Activated T-helper 2 cell treated with anti-CD3 and anti-CD28 coated beads, Interferon-gamma antibody, Interleukin-2, Interleukin-4, amounts not matched to agents 10 μg/mL and 5 μg/mL and 100 μg/mL, durations not matched to agents 14 hours and 24 hours and 36 hours (primary cell): ENCODE measurements at regions of chr15 and their contacts with region 1.

Region 1: DNA sequence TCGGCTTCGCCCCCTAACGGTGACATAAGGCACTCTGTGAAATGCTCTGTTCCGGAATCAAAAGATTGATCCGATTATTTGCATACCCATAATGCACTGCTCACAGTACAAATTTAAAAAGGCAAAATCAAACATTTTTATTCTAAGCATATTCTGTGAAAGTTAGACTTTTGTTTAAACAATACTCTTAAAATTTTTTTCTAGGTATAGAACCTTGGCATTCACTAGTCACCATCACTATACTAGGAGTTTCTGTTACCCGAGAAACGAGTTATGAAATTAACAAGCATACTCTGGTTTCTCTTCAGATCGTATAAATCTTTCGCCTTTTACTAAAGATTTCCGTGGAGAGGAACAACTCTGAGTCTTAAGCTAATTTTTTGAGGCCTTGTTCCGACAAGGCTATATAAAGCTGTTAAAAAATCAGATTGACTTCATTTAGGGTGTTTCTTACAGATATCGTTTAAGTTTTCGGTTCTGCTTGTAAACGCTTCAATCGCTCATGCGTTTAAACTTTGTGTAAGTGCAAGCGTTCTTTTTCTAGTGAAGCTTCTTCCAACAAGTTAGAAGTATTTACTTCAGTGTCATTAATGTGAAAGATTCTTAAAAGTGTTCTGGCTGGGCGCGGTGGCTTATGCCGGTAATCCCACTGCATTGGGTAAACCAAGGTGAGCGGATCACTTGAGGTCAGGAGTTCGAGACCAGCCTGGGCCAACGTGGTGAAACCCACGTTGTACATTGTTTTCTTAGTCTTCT is at the start of gene RNU5B-1:
- DNase-seq: peak; percentile 85
- H3K4me3 Mint-ChIP-seq: peak within 1 kb of the TSS; percentile 87
- H3K27ac Mint-ChIP-seq: peak within 1 kb of the TSS; percentile 96
- H3K4me1 Mint-ChIP-seq: peaks cover 22% of the 10 kb centered on the region
- H3K27me3 Mint-ChIP-seq: no peaks in the 10 kb centered on the region
- total RNA-seq, gene RNU5B-1: not detected in 2 replicates

Region 2: DNA sequence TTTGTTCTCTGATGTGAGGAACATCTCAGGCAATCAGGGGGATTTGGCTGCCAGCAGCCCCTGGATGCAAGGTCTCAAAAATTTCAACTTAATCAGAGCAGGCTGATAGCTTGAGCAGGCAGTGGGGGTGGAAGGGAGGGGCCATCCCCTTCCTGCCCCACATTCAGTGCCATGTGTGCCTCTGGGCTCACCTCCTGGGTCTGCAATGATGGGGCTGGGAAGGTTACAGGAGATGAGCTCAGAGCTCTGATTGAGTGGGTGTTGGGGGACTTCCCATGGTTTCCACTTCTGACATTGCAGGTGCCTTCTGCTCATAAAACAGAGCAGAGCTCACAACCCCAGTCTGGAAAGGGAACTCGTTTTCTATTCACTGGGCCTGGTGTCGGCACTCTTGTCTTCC is 54.9 kb before region 1 on chr15:
- intact Hi-C with region 1: loop called (anchors 2 kb)
- DNase-seq: no peak
- H3K4me3 Mint-ChIP-seq: no peak overlapping the region
- H3K27ac Mint-ChIP-seq: peak overlapping the region; percentile 30
- H3K4me1 Mint-ChIP-seq: peaks cover 7% of the 10 kb centered on the region
- H3K27me3 Mint-ChIP-seq: no peaks in the 10 kb centered on the region

Region 3: DNA sequence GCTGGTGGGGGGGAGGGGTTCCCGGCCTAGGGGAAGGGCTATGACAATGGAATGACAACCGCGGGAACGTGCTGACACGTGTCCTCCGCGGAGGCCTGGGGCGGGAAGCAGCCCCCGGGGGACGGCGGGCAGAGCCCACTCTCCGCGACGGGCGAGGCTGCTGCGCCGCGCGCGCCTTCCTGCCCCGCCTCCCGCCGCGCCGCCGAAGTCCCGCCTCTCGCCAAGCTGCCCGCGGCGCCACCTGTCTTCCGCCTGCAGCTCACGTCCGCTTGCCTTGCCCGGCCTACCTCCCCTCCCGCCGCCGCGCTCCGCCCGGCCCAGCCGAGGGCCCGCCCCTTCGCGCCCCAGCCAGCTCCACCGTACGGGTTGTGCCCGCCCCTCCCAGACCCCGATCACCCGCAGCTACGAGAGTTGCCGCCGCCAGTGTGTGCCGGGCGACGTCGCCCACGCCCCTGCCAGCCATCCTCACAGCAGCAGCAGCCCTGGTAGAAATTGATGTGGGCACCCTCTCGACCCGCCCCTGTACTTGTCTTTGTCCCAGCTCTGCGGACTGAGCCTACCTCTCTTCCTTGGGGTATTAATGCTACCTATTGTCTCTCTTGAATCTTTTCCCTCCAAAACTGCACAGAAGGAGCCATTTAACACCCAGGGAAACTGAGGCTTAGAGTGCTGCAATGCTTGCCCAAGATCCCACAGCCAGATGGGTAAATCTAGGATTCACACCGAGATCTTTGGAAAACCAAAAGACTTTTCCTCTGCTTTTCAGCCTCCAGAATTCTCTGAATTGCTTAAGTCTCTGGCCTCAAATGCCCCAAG is 17.7 kb before region 1 on chr15 and contains the start of gene PARP16:
- intact Hi-C with region 1: loop called (anchors 2 kb)
- DNase-seq: peak; percentile 90
- H3K4me3 Mint-ChIP-seq: peak within 1 kb of the TSS; percentile 83
- H3K27ac Mint-ChIP-seq: peak within 1 kb of the TSS; percentile 80
- H3K4me1 Mint-ChIP-seq: peaks cover 26% of the 10 kb centered on the region
- H3K27me3 Mint-ChIP-seq: no peaks in the 10 kb centered on the region
- total RNA-seq, gene PARP16: 11.0 and 11.5 TPM in 2 replicates

Region 4: GRCh38 chr15:65326117-65326526 is 21.6 kb after region 1 on chr15:
- intact Hi-C with region 1: no loop called
- DNase-seq: no peak
- H3K4me3 Mint-ChIP-seq: no peak overlapping the region
- H3K27ac Mint-ChIP-seq: no peak overlapping the region
- H3K4me1 Mint-ChIP-seq: no peaks in the 10 kb centered on the region
- H3K27me3 Mint-ChIP-seq: peaks cover 10% of the 10 kb centered on the region

Region 5: GRCh38 chr15:65336493-65337455 is 32.2 kb after region 1 on chr15:
- intact Hi-C with region 1: no loop called
- DNase-seq: no peak
- H3K4me3 Mint-ChIP-seq: no peak overlapping the region
- H3K27ac Mint-ChIP-seq: no peak overlapping the region
- H3K4me1 Mint-ChIP-seq: no peaks in the 10 kb centered on the region
- H3K27me3 Mint-ChIP-seq: peaks cover 5% of the 10 kb centered on the region